CD14-positive monocyte (primary cell): ENCODE measurements at regions of chr3 and their contacts with region 1.

Region 1: GRCh38 chr3:101944308-101944707 is 95.0 kb downstream of the NFKBIZ start:
- DNase-seq: no peak
- H3K4me3 ChIP-seq: no peak overlapping the region
- H3K4me3 Mint-ChIP-seq: no peak overlapping the region
- H3K27ac ChIP-seq: no peak overlapping the region
- H3K27ac Mint-ChIP-seq: no peak overlapping the region
- H3K4me1 ChIP-seq: peaks cover 40 to 43% of the 10 kb centered on the region in 2 donors
- H3K4me1 Mint-ChIP-seq: peaks cover 14% of the 10 kb centered on the region
- H3K27me3 ChIP-seq: no peaks in the 10 kb centered on the region
- H3K27me3 Mint-ChIP-seq: no peaks in the 10 kb centered on the region
- CTCF ChIP-seq: no peak

Region 2: DNA sequence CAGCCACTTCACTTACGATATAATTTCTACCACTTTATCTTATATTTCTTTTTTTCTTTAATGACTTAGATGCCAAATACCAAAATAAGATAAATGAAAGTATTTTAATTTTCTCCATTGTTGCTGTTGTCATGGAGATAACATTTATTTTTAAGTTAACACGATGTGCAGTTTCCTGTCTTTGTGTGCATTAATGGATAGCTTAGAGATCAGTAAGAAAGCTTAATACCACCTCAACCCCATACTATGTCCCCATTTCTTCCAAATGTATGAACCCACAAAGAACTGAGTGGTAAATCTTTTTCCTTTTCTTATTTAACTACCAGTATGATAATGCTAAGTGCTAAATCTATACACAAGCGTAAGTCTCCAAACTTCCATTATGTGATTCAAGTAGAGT is 353.2 kb before region 1 on chr3:
- intact Hi-C with region 1: no loop called
- DNase-seq: no peak
- H3K4me3 ChIP-seq: no peak overlapping the region
- H3K4me3 Mint-ChIP-seq: no peak overlapping the region
- H3K27ac ChIP-seq: no peak overlapping the region
- H3K27ac Mint-ChIP-seq: peak overlapping the region in 1 of 7 donors; percentile 15
- H3K4me1 ChIP-seq: no peaks in the 10 kb centered on the region
- H3K4me1 Mint-ChIP-seq: no peaks in the 10 kb centered on the region
- H3K27me3 ChIP-seq: no peaks in the 10 kb centered on the region
- H3K27me3 Mint-ChIP-seq: no peaks in the 10 kb centered on the region
- CTCF ChIP-seq: no peak

Region 3: GRCh38 chr3:101963902-101964362 is 19.6 kb after region 1 on chr3:
- intact Hi-C with region 1: loop called in 1 of 2 experiments (anchors 2 kb)
- DNase-seq: peak; percentile 48 to 76 (median 67)
- H3K4me3 ChIP-seq: no peak overlapping the region
- H3K4me3 Mint-ChIP-seq: peak overlapping the region in 1 of 2 donors; percentile 12
- H3K27ac ChIP-seq: peak overlapping the region in 1 of 2 donors; percentile 42
- H3K27ac Mint-ChIP-seq: peak overlapping the region; percentile 15 to 94 (median 62)
- H3K4me1 ChIP-seq: peaks cover 26 to 31% of the 10 kb centered on the region in 2 donors
- H3K4me1 Mint-ChIP-seq: peaks cover 31% of the 10 kb centered on the region
- H3K27me3 ChIP-seq: no peaks in the 10 kb centered on the region
- H3K27me3 Mint-ChIP-seq: no peaks in the 10 kb centered on the region
- CTCF ChIP-seq: no peak